ENCODE measurements at regions of chr1 and their contacts with region 1.

Region 1: GRCh38 chr1:171313835-171314320 is at the start of gene FMO4:
- DNase-seq: peak; percentile 88
- H3K4me3 Mint-ChIP-seq: peak within 1 kb of the TSS; percentile 70
- H3K27ac Mint-ChIP-seq: peak within 1 kb of the TSS; percentile 72
- H3K4me1 Mint-ChIP-seq: peaks cover 17% of the 10 kb centered on the region
- H3K27me3 Mint-ChIP-seq: no peaks in the 10 kb centered on the region
- total RNA-seq, gene FMO4: 1.4 to 1.9 TPM

Region 2: DNA sequence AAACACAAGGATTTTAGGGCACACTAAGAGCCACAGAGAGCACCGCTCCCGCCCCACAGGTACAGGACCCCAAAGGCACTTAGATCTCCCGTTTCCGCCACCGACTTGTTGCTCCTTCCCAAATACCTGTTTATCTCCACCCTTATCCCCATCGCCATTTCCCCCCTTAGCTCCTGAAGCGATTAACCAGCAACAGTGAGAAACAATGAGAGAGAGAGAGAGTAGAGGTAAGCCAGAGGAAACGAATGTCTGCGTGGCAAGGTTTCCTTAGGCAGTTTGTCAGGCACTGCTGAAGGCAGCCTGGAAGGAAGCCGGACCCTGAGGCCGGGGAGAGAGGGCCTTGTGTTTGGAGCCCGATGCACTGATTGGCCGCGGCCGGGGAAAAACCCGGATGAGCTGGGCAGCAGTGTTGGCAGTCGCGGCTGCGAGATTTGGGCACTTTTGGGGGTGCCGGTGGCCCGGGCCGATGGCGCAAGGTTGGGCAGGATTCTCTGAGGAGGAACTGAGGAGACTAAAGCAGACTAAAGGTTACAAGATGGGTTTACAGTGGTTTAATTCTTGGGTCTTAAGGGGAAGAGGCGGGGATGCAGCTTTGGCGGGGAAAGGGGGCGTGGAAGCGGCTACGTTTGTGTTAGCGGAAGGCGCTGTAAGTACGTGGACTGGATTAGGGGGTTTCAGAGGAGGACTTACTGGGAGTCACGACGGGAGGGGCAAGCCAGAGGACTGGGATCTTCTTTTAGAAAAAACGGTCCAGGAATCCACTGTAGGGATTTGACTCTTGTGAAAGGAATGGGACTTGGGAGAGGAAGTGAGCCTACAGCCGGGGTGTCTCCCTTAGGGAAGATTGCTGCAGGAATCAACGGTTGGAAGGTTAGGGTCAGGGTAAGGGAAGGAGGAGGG is 781.9 kb before region 1 on chr1 and contains the start of gene GORAB:
- CTCF ChIA-PET with region 1: no interaction called
- POLR2A ChIA-PET with region 1: no interaction called
- intact Hi-C with region 1: loop called (anchors 10 kb)
- DNase-seq: peak; percentile 93
- H3K4me3 Mint-ChIP-seq: no peak within 1 kb of the TSS
- H3K27ac Mint-ChIP-seq: no peak within 1 kb of the TSS
- H3K4me1 Mint-ChIP-seq: peaks cover 15% of the 10 kb centered on the region
- H3K27me3 Mint-ChIP-seq: no peaks in the 10 kb centered on the region
- total RNA-seq, gene GORAB: 8.5 to 9.0 TPM

Region 3: DNA sequence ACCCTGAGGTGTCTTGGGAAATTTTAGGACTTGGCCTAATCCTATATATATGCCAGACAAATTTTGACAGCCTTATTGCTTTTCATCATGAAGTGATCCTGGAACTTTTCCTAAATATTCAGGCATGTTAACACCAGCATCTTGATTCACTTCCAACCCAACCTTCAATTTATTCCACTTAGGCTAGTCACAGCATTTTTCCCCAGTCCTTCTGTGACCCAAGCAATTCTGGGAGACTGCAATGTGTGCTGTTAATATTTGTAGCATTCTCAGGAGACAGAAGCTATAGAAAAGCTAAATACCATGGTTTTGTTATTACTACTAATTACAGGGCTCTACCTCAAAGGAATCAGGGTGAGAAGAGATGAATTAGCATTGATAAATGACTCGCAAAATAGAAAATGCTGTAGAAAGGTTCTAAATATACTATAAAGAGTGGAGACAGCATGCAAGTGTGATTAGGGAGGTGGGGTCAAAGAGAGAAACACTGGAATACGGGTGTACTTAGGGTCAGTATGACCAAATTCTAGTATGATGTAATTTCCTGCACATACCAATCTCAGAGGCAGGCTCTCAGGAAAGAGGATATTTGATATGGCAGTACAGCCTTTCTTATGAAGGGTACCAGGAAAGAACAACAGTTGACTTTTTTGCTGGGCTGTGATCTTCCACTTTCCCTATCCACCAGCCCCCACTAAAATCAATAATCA is 620.9 kb before region 1 on chr1:
- CTCF ChIA-PET with region 1: interaction called, 13 read pairs
- POLR2A ChIA-PET with region 1: no interaction called
- intact Hi-C with region 1: loop called (anchors 2 kb)
- DNase-seq: no peak
- H3K4me3 Mint-ChIP-seq: no peak overlapping the region
- H3K27ac Mint-ChIP-seq: no peak overlapping the region
- H3K4me1 Mint-ChIP-seq: no peaks in the 10 kb centered on the region
- H3K27me3 Mint-ChIP-seq: peaks cover 13% of the 10 kb centered on the region

Region 4: GRCh38 chr1:170893655-170894297 is 420.1 kb before region 1 on chr1:
- CTCF ChIA-PET with region 1: no interaction called
- POLR2A ChIA-PET with region 1: no interaction called
- intact Hi-C with region 1: no loop called
- DNase-seq: no peak
- H3K4me3 Mint-ChIP-seq: no peak overlapping the region
- H3K27ac Mint-ChIP-seq: no peak overlapping the region
- H3K4me1 Mint-ChIP-seq: no peaks in the 10 kb centered on the region
- H3K27me3 Mint-ChIP-seq: peaks cover 21% of the 10 kb centered on the region

Region 5: GRCh38 chr1:170910273-170910672 is 403.6 kb before region 1 on chr1:
- CTCF ChIA-PET with region 1: no interaction called
- POLR2A ChIA-PET with region 1: no interaction called
- intact Hi-C with region 1: no loop called
- DNase-seq: no peak
- H3K4me3 Mint-ChIP-seq: no peak overlapping the region
- H3K27ac Mint-ChIP-seq: no peak overlapping the region
- H3K4me1 Mint-ChIP-seq: no peaks in the 10 kb centered on the region
- H3K27me3 Mint-ChIP-seq: peaks cover 3% of the 10 kb centered on the region

Region 6: DNA sequence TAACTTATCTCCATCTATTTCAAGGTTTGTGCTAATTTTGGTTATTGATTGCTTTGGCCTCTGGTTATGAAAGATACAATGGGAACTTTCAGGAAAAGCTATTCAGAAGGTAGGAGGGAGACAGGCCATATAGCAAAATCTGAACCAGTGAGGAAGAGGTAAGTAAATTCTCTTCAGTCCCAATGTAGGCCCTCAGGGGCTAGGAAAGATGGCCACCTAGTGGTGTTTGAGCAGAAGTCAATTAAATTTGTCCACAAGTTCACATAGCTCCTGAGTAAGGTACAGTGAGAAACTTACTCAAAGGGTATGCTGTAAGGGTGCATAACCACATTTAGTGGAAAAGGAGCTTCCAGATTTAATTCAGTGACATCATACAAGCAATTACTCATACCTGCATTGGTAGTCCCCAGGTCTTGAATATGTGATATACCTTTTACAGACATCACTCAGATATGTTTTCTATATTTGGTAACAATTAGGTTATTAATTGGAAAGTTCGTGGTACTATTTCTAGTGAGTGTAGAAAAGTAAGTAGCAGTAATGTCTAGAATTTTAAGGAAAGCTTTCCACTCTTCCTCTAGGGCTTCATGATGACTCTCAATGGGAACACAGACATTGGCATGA is 87.0 kb before region 1 on chr1:
- CTCF ChIA-PET with region 1: interaction called, 16 read pairs
- POLR2A ChIA-PET with region 1: no interaction called
- intact Hi-C with region 1: no loop called
- DNase-seq: peak; percentile 33
- H3K4me3 Mint-ChIP-seq: no peak overlapping the region
- H3K27ac Mint-ChIP-seq: no peak overlapping the region
- H3K4me1 Mint-ChIP-seq: no peaks in the 10 kb centered on the region
- H3K27me3 Mint-ChIP-seq: peaks cover 1% of the 10 kb centered on the region

Region 7: DNA sequence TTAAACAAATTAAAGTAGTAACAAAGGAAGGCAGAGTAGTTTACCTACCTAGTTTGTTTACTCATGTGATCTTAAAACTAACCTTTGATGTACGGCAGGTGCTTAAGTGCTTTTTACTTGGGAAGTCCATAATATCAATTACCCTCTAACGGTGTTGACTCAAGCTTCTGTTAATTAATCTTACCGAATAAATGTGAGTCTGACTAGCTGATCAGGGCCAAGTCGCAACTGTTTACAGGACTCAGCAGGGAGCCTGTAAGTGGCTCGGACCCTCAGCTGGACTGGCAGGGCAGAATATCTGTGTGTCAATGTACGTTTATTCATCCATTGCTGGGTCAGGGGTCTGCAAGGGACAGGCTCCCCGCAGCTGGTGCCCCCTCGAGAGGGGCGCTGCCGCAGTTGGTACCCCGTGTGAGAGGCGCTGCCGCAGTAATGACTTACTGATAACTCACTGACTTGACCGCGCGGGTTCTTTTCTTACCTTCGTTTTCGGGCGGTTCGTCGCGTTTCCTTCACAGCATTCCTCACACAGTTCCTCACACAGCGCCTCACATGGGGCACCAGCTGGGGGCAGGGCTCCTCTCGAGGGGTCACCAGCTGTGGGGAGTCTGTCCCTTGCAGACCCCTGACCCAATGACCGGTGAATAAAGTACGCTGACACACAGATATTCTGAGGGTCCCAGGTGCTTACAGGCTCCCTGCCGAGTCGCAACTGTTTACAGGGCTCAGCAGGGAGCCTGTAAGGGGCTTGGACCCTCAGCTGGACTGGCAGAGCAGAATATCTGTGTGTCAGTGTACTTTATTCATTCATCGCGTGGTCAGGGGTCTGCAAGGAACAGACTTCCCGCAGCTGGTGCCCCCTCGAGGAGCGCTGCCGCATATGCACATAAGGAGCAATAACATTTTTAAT is 62.6 kb before region 1 on chr1:
- CTCF ChIA-PET with region 1: interaction called, 96 read pairs
- POLR2A ChIA-PET with region 1: no interaction called
- intact Hi-C with region 1: loop called (anchors 2 kb)
- DNase-seq: peak; percentile 51
- H3K4me3 Mint-ChIP-seq: peak overlapping the region; percentile 75
- H3K27ac Mint-ChIP-seq: no peak overlapping the region
- H3K4me1 Mint-ChIP-seq: peaks cover 4% of the 10 kb centered on the region
- H3K27me3 Mint-ChIP-seq: peaks cover 35% of the 10 kb centered on the region

Measured in activated CD4-positive, alpha-beta memory T cell treated with anti-CD3 and anti-CD28 coated beads for 36 hours (primary cell).